Common myeloid progenitor, CD34-positive (primary cell): ENCODE measurements at regions of chr17 and their contacts with region 1.

Region 1: DNA sequence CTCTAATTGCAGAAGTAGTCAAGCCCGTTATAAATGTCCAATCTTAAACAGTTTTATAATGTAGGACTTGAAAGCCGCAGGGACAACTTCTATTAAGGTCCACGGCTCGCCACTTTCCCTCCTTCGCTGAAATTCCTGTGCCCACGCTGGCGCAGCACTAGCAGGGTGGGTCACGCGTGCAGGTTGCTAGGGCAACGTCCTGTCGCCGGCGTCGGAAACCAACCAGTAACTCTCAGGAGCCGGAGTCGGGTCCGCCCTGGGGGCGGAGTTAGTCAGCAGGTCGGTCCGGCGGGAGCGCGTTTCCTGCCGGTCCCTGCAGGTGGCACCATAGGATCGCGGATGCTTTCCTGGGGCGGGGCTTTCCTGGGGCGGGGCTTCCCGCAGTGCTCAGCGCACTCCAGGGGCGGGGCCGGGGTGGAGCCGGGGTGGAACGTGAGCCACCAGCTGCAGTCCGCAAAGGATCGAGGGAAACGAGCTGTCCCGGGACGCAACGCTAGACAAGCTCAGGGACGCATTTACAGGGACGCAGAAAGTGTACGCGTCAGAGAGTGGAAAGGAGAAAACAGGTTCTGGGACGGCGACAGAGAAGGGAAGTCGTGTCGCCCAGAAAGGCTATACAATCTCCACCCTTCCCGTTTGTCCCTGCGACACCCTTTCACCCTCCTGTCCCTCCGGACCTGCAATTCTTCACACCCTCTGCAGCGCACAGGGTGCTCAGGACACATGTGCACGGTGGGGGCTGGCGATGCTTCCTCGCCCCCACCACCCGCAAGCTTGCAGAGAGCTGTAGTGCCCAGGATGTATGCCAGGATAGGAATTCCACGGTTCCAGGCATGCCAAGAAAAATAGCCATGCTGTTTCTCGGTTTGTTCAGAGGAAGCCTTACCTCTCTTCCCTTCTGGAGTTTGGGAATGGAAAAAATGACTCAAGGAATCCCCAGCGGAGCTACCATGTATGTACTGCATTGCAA is 12.4 kb downstream of the COPZ2 start:
- DNase-seq: peak; percentile 94 to 96 (median 96)
- H3K4me3 ChIP-seq: peak overlapping the region; percentile 41 to 89 (median 72)
- H3K27ac ChIP-seq: no peak overlapping the region
- H3K4me1 ChIP-seq: peaks cover 4 to 38% (median 35%) of the 10 kb centered on the region in 4 experiments
- H3K27me3 ChIP-seq: peaks cover 0 to 2% (median 0%) of the 10 kb centered on the region in 5 experiments

Region 2: GRCh38 chr17:47957591-47958428 is 67.4 kb before region 1 on chr17 and contains the start of gene PRR15L:
- CTCF ChIA-PET with region 1: no interaction called
- POLR2A ChIA-PET with region 1: no interaction called
- DNase-seq: no peak
- H3K4me3 ChIP-seq: no peak within 1 kb of the TSS
- H3K27ac ChIP-seq: no peak within 1 kb of the TSS
- H3K4me1 ChIP-seq: peaks cover 0 to 5% (median 0%) of the 10 kb centered on the region in 4 experiments
- H3K27me3 ChIP-seq: no peaks in the 10 kb centered on the region

Region 3: GRCh38 chr17:47999582-47999981 is 25.6 kb before region 1 on chr17:
- CTCF ChIA-PET with region 1: no interaction called
- POLR2A ChIA-PET with region 1: no interaction called
- DNase-seq: peak in 1 of 3 donors; percentile 45
- H3K4me3 ChIP-seq: no peak overlapping the region
- H3K27ac ChIP-seq: no peak overlapping the region
- H3K4me1 ChIP-seq: peaks cover 0 to 42% (median 20%) of the 10 kb centered on the region in 4 experiments
- H3K27me3 ChIP-seq: no peaks in the 10 kb centered on the region

Region 4: GRCh38 chr17:48011405-48012150 is 13.6 kb before region 1 on chr17:
- CTCF ChIA-PET with region 1: interaction called, 16 read pairs
- POLR2A ChIA-PET with region 1: no interaction called
- DNase-seq: peak; percentile 40 to 65 (median 58)
- H3K4me3 ChIP-seq: peak overlapping the region; percentile 9 to 75 (median 55)
- H3K27ac ChIP-seq: no peak overlapping the region
- H3K4me1 ChIP-seq: peaks cover 0 to 38% (median 16%) of the 10 kb centered on the region in 4 experiments
- H3K27me3 ChIP-seq: peaks cover 0 to 35% (median 10%) of the 10 kb centered on the region in 5 experiments

Region 5: GRCh38 chr17:48047741-48048383 is 22.6 kb after region 1 on chr17 and contains the start of gene NFE2L1:
- CTCF ChIA-PET with region 1: interaction called, 36 read pairs
- POLR2A ChIA-PET with region 1: interaction called, 8 read pairs
- DNase-seq: peak; percentile 99 to 100 (median 100)
- H3K4me3 ChIP-seq: peak within 1 kb of the TSS; percentile 79 to 94 (median 84)
- H3K27ac ChIP-seq: peak within 1 kb of the TSS; percentile 88 to 94
- H3K4me1 ChIP-seq: peaks cover 7 to 54% (median 42%) of the 10 kb centered on the region in 4 experiments
- H3K27me3 ChIP-seq: no peaks in the 10 kb centered on the region

Region 6: GRCh38 chr17:48068491-48068961 is 43.3 kb after region 1 on chr17:
- CTCF ChIA-PET with region 1: interaction called, 188 read pairs
- POLR2A ChIA-PET with region 1: interaction called, 9 read pairs
- DNase-seq: peak; percentile 23 to 36 (median 33)
- H3K4me3 ChIP-seq: no peak overlapping the region
- H3K27ac ChIP-seq: no peak overlapping the region
- H3K4me1 ChIP-seq: no peaks in the 10 kb centered on the region
- H3K27me3 ChIP-seq: no peaks in the 10 kb centered on the region

Region 7: GRCh38 chr17:48100160-48100559 is 74.9 kb after region 1 on chr17:
- CTCF ChIA-PET with region 1: interaction called, 13 read pairs
- POLR2A ChIA-PET with region 1: no interaction called
- DNase-seq: no peak
- H3K4me3 ChIP-seq: peak overlapping the region in 6 of 7 experiments; percentile 67 to 86 (median 78)
- H3K27ac ChIP-seq: peak overlapping the region in 1 of 2 experiments; percentile 43
- H3K4me1 ChIP-seq: peaks cover 9 to 27% (median 23%) of the 10 kb centered on the region in 4 experiments
- H3K27me3 ChIP-seq: no peaks in the 10 kb centered on the region